ENCODE measurements at regions of chr7 and their contacts with region 1.

Region 1: GRCh38 chr7:134932707-134933370 is 53.5 kb upstream of the AGBL3 start:
- DNase-seq: peak; percentile 23 to 91
- H3K4me3 ChIP-seq: peak overlapping the region; percentile 7 to 28
- H3K27ac ChIP-seq: peak overlapping the region; percentile 74 to 90
- H3K4me1 ChIP-seq: peaks cover 32 to 49% of the 10 kb centered on the region in 2 donors
- H3K27me3 ChIP-seq: no peaks in the 10 kb centered on the region
- CTCF ChIP-seq: no peak

Region 2: DNA sequence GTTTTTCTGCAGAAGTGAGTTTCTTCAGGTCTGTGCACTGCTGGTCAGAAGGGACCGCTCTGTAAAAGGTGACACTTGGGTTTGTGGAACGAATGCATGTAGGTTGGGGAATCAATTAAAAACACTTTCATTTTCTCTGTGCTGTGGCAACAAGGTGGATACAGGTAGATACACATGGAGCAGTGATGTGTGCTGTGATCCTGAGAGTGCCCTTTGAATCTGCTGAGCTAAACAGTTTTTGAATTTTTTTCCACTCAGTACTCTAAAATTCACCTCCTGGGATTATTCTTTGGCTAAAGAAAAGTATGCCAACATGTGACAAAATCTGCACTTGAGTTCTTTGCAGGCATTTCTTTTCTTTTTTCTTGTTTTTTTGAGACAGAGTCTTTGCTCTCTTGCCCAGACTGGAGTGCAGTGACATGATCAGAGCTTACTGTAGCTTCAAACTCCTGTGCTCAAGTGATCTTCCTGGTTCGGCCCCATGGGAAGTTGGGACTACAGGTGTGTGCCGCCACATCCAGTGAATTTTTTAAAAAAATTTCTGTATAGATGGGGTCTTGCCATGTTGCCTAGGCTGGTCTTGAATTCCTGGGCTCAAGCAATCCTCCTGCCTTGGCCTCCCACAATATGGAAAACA is 1341.0 kb before region 1 on chr7:
- intact Hi-C with region 1: no loop called
- DNase-seq: no peak
- H3K4me3 ChIP-seq: no peak overlapping the region
- H3K27ac ChIP-seq: no peak overlapping the region
- H3K4me1 ChIP-seq: no peaks in the 10 kb centered on the region
- H3K27me3 ChIP-seq: no peaks in the 10 kb centered on the region
- CTCF ChIP-seq: no peak

Region 3: DNA sequence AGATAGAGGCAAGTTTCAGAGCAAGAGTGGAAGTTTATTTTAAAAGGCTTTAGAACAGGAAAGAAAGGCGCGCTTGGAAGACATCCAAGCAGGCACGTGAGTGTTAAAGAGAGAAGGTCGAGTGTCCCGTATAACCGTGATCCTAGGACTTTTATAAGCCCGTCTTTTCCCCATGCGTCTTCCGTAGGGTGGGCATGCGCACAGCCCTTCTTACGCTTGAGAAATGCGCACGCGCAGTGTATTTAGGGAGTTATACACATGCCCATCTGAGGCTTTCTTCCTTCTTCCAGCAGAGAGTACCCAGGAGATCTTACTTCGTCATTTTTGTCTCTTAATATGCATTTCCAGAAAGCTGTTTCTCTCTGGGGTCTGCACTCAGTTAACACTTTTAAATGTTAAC is 101.0 kb before region 1 on chr7:
- intact Hi-C with region 1: no loop called
- DNase-seq: peak in 1 of 2 donors; percentile 81
- H3K4me3 ChIP-seq: peak overlapping the region in 1 of 2 donors; percentile 54
- H3K27ac ChIP-seq: peak overlapping the region; percentile 89
- H3K4me1 ChIP-seq: peaks cover 26 to 81% of the 10 kb centered on the region in 2 donors
- H3K27me3 ChIP-seq: no peaks in the 10 kb centered on the region
- CTCF ChIP-seq: no peak

Region 4: DNA sequence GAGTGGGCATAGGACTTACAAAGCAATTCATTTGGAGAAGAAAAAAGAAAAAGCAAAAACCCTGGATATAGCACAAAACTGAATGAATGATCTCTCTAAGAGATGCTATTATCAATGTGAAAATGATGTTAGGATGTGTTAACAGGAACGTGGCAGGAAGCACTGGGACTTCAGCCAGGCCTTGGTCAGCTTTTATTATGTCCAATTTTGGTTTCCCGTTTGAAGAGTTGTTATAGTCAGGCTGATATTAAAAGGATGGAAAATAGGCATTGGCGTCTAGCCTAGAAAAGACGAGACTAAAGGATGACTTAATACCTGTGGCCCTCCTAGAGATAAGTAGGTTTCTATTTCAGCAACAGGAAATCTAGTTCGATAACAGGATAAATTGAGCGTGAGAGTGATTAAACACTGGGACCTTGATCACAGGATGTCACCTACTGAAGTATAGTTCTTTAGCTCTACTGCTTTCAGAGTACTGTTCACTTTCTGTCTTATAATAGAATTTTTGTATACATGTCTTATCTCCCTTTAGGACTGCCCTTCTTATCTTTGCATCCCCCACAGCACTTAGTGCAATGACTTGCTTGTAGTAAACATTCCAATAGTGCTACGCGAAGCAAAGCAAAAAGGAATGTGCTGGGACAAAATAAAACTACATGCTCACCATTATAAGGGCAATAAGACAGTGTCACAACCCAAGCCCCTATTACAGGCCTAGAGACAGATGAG is 46.3 kb before region 1 on chr7:
- intact Hi-C with region 1: loop called (anchors 5 kb)
- DNase-seq: no peak
- H3K4me3 ChIP-seq: peak overlapping the region; percentile 13 to 19
- H3K27ac ChIP-seq: peak overlapping the region; percentile 71
- H3K4me1 ChIP-seq: peaks cover 16 to 56% of the 10 kb centered on the region in 2 donors
- H3K27me3 ChIP-seq: no peaks in the 10 kb centered on the region
- CTCF ChIP-seq: no peak

Region 5: GRCh38 chr7:134905375-134905774 is 27.5 kb before region 1 on chr7:
- intact Hi-C with region 1: loop called (anchors 2 kb)
- DNase-seq: peak in 1 of 2 donors; percentile 88
- H3K4me3 ChIP-seq: no peak overlapping the region
- H3K27ac ChIP-seq: peak overlapping the region; percentile 77 to 78
- H3K4me1 ChIP-seq: peaks cover 10 to 85% of the 10 kb centered on the region in 2 donors
- H3K27me3 ChIP-seq: no peaks in the 10 kb centered on the region
- CTCF ChIP-seq: peak; percentile 31 to 42 (median 34)

Measured in ascending aorta (tissue), 2 donors.